ENCODE measurements at regions of chr1 and their contacts with region 1.

Region 1: GRCh38 chr1:100606438-100606837 is 68.5 kb downstream of the GPR88 start:
- DNase-seq: peak; percentile 18 to 47
- ATAC-seq: peak in 7 of 8 donors; percentile 67 to 85 (median 77)
- H3K4me3 ChIP-seq: no peak overlapping the region
- H3K27ac ChIP-seq: no peak overlapping the region
- H3K4me1 ChIP-seq: peaks cover 0 to 3% (median 0%) of the 10 kb centered on the region in 9 donors
- H3K27me3 ChIP-seq: no peaks in the 10 kb centered on the region
- CTCF ChIP-seq: peak in 8 of 9 donors; percentile 45 to 80 (median 76)

Region 2: DNA sequence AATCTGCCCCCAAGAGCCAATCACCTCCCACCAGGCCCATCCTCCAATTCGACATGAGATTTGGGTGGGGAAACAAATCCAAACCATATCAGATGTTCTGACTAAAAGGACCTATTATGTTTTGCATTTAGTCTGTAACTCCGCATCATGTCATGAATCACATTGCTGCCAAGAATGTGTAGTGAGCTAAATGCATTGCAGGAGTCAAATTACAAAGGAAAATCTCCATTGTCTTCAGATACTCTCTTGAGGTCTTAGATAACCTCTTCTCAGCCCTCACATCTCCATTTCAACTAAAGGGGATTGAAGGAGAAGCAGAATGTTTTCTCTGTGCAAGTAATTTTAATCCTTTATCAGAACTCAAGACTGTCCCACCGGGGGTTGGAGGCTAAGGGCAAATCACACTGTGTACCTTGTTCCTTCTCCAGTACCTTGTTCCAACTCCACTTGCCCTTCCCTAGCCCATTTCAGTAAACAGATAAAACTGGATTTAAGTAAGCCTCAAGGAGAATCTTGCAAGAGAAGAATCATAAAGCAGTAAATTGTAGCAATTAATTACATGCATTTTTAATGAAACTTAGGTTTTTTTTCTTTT is 254.1 kb after region 1 on chr1:
- intact Hi-C with region 1: loop called in 2 of 10 experiments (anchors 5 to 10 kb)
- DNase-seq: no peak
- ATAC-seq: peak in 2 of 8 donors; percentile 40 to 63
- H3K4me3 ChIP-seq: no peak overlapping the region
- H3K27ac ChIP-seq: no peak overlapping the region
- H3K4me1 ChIP-seq: no peaks in the 10 kb centered on the region
- H3K27me3 ChIP-seq: peaks cover 0 to 6% (median 0%) of the 10 kb centered on the region in 7 donors
- CTCF ChIP-seq: no peak

Measured in heart right ventricle (tissue), 16 donors.